HEK293 (cell line): ENCODE measurements at regions of chr14 and their contacts with region 1.

Region 1: DNA sequence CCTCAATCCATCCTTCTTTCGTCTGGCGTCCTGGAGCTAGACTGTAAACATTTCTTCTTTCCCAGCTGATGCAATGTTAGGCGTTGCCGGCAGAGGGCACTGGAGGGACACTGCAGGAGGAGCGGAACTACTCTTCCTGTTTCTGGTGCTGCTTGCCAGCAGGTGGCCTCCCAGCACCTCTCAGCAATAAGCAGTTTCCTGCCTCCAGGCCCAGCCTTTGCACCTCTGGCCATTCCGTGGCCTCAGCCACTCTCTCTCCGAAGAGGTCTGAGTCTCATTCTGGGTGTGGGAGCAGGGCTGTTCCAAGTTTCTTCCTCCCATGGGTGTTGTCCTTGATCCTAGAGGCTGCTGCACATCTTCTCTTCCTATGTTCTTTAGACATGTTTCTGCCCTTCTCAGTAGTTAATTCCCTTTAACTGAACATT is 7.5 kb upstream of the ASPG start:
- H3K4me3 ChIP-seq: no peak overlapping the region
- H3K27ac ChIP-seq: no peak overlapping the region
- H3K4me1 ChIP-seq: no peaks in the 10 kb centered on the region; the same call in 1 of the 2 replicates
- CTCF ChIP-seq: peak; percentile 100

Region 2: GRCh38 chr14:103989964-103990363 is 88.1 kb before region 1 on chr14:
- CTCF ChIA-PET with region 1: no interaction called
- POLR2A ChIA-PET with region 1: no interaction called
- H3K4me3 ChIP-seq: no peak overlapping the region
- H3K27ac ChIP-seq: no peak overlapping the region
- H3K4me1 ChIP-seq: no peaks in the 10 kb centered on the region
- CTCF ChIP-seq: no peak

Region 3: DNA sequence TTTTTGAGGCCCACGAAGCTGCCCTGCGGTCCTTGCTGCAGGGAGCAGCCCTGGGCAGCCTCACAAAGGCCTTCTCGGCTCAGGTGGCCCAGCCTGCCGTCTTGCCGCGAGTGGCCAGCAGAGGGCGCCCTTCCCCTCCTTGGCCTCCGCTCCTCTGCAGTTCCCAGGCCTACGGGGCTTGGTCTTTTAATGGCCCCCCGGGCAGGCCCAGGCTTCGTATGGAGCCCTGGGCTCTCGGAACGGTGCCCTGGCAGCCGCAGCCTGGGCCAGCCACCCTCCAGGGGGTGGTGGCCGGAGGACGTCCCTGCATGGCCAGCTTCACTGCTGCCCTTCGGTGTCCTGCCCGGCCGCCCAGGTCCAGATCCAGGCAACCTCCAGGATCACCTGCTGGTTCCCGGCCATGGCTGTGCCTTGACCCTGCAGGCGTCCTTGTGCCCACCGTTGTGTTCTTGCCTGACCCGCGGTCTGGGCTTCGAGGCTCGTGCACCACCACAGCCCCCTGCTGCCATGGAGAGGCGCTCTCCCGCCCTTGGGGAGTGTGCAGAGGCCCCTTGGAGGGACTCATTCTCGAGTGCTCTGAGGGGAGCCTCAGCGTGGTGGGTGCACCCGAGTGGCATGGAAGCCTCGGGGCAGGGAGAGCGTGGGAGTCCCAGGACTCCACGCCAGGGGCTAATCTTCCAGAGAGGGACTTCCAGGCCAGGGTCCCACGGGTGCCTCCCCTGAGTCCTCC is 16.8 kb after region 1 on chr14:
- CTCF ChIA-PET with region 1: interaction called, 16 read pairs
- POLR2A ChIA-PET with region 1: no interaction called
- H3K4me3 ChIP-seq: no peak overlapping the region
- H3K27ac ChIP-seq: no peak overlapping the region
- H3K4me1 ChIP-seq: no peaks in the 10 kb centered on the region
- CTCF ChIP-seq: peak; percentile 95

Region 4: DNA sequence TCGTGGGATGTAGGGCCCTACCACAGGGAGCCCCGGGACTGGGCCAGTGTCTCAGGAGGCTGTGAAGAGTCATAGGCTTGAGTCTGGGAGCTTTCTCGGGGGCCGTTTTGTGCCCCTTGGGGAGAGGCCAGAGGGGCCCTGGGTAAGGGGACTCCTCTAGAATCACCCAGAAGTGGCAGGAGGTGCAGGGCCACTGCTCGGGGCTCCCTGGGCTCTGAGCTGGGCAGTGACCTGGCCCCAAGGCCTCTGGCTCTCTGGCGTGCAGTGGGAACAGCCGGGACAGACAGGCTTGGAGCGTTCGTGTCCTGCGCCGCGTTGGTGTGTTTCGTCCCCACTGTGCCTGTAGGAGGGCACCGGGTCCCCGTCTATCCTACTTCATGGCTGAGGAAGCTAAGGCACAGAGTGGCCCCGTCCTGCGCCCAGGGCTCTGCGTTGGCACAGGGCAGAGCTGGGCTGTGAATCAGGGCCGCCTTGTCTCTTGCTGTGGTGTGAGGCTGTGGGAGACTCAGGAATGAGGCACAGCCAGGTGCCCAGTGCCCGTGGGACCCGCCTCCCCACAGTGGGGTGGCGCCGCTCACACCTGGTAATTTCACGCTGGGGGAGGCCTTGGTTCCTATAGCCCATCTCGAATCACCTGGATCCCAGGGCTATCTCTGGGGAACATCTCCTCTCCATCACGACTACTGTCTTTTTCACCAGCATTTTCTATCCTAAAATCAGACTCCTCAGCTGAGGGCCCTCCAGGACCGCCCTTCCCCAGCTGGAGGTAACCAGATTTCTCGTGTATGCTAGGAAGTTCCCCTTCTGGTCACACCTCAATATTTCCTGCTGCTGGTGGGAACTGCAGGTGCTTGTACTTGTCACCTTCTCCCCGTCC is 36.6 kb after region 1 on chr14:
- CTCF ChIA-PET with region 1: interaction called, 10 read pairs
- POLR2A ChIA-PET with region 1: no interaction called
- H3K4me3 ChIP-seq: no peak overlapping the region
- H3K27ac ChIP-seq: no peak overlapping the region
- H3K4me1 ChIP-seq: no peaks in the 10 kb centered on the region; the same call in 1 of the 2 replicates
- CTCF ChIP-seq: no peak

Region 5: DNA sequence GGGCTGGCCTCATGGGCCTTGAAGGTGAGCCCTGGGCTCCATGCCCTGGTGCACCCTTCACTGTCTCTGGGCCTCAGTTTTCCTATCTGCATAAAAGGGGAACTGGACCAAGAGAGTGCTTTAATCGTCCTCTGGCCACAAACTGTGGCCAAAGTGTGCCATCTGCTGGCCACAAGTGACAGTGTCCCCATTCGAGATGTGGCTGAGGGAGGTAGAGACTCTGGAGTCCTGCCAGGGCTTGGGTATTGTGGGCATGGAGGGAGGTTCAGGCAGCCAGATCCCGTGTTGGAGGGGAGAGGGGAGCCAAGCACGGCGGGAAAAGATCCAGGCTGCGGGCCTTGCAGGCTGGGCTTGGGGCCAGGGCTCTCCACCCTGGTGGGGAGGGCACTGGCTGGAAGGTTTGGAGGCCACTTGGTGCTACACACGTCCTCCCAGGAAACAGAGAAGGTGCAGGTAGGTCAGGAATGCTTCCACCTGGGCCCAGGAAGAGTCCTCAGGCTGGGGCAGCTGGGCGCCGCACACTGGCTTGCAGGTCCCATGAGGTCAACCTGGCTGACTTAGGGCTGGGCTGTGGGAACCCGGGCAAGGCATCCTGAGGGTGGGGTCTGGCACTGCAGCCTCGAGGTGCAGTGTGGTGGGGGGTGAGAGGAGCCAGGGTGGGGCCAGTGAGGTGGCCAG is 53.1 kb after region 1 on chr14:
- CTCF ChIA-PET with region 1: interaction called, 41 read pairs
- POLR2A ChIA-PET with region 1: no interaction called
- H3K4me3 ChIP-seq: no peak overlapping the region
- H3K27ac ChIP-seq: no peak overlapping the region
- H3K4me1 ChIP-seq: no peaks in the 10 kb centered on the region; the same call in 1 of the 2 replicates
- CTCF ChIP-seq: no peak

Region 6: GRCh38 chr14:104322531-104323366 is 244.7 kb after region 1 on chr14:
- CTCF ChIA-PET with region 1: no interaction called
- POLR2A ChIA-PET with region 1: no interaction called
- H3K4me3 ChIP-seq: no peak overlapping the region
- H3K27ac ChIP-seq: no peak overlapping the region
- H3K4me1 ChIP-seq: no peaks in the 10 kb centered on the region
- CTCF ChIP-seq: no peak

Region 7: DNA sequence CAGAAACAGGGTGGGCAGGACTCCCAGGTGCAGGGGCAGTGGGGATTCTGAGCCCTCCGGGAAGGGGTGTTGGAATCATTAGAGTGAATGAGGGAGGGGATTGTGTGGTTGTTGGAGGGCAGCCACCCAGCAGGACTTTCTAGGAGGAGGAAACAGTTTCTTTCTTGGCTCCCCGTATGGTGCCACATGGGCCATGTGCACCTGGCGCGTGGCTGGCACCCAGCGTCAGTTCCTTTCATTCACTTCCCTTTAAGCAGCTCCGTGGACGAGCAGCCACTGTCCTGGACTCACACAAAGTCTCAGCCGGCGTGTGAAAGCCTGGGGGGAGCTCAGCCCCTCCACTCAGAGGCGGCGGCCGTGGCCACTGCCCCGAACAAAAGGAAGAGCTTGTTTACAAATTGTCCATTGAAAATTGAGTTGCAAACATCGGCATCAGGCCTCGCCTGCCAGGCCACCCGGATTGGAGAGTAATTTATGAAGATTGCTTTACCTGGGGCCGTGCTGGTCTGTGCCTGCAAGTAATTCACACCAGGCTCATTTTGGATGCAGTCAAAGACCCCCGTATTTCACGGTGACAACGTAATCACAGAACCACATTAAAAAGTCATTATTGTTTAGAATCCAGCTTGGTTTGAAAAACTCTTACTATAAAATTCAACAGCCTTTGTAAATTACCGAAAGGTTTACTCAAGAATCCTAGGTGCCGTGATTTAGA is 399.8 kb after region 1 on chr14:
- CTCF ChIA-PET with region 1: no interaction called
- POLR2A ChIA-PET with region 1: no interaction called
- H3K4me3 ChIP-seq: no peak overlapping the region
- H3K27ac ChIP-seq: no peak overlapping the region
- H3K4me1 ChIP-seq: no peaks in the 10 kb centered on the region
- CTCF ChIP-seq: no peak